ENCODE measurements at regions of chr2 and their contacts with region 1.

Region 1: GRCh38 chr2:238438856-238439849 is 12.4 kb downstream of the ASB1 start:
- DNase-seq: peak; percentile 84
- H3K4me3 Mint-ChIP-seq: peak overlapping the region; percentile 57
- H3K27ac Mint-ChIP-seq: peak overlapping the region; percentile 98
- H3K4me1 Mint-ChIP-seq: peaks cover 86% of the 10 kb centered on the region
- H3K27me3 Mint-ChIP-seq: no peaks in the 10 kb centered on the region
- CTCF ChIP-seq: no peak

Region 2: GRCh38 chr2:238379096-238379810 is 59.9 kb before region 1 on chr2:
- CTCF ChIA-PET with region 1: interaction called, 6 read pairs
- intact Hi-C with region 1: loop called (anchors 5 kb)
- DNase-seq: peak; percentile 78
- H3K4me3 Mint-ChIP-seq: peak overlapping the region; percentile 15
- H3K27ac Mint-ChIP-seq: peak overlapping the region; percentile 86
- H3K4me1 Mint-ChIP-seq: peaks cover 55% of the 10 kb centered on the region
- H3K27me3 Mint-ChIP-seq: no peaks in the 10 kb centered on the region
- CTCF ChIP-seq: no peak

Region 3: GRCh38 chr2:238426568-238427434 is 12.4 kb before region 1 on chr2 and contains the start of gene ASB1:
- CTCF ChIA-PET with region 1: interaction called, 8 read pairs
- intact Hi-C with region 1: loop called (anchors 1 kb)
- DNase-seq: peak; percentile 89
- H3K4me3 Mint-ChIP-seq: peak within 1 kb of the TSS; percentile 78
- H3K27ac Mint-ChIP-seq: peak within 1 kb of the TSS; percentile 91
- H3K4me1 Mint-ChIP-seq: peaks cover 38% of the 10 kb centered on the region
- H3K27me3 Mint-ChIP-seq: no peaks in the 10 kb centered on the region
- CTCF ChIP-seq: no peak
- total RNA-seq, gene ASB1: 64.2 and 71.6 TPM in 2 replicates

Measured in Calu3 (cell line).